ENCODE measurements at regions of chr5 and their contacts with region 1.

Region 1: DNA sequence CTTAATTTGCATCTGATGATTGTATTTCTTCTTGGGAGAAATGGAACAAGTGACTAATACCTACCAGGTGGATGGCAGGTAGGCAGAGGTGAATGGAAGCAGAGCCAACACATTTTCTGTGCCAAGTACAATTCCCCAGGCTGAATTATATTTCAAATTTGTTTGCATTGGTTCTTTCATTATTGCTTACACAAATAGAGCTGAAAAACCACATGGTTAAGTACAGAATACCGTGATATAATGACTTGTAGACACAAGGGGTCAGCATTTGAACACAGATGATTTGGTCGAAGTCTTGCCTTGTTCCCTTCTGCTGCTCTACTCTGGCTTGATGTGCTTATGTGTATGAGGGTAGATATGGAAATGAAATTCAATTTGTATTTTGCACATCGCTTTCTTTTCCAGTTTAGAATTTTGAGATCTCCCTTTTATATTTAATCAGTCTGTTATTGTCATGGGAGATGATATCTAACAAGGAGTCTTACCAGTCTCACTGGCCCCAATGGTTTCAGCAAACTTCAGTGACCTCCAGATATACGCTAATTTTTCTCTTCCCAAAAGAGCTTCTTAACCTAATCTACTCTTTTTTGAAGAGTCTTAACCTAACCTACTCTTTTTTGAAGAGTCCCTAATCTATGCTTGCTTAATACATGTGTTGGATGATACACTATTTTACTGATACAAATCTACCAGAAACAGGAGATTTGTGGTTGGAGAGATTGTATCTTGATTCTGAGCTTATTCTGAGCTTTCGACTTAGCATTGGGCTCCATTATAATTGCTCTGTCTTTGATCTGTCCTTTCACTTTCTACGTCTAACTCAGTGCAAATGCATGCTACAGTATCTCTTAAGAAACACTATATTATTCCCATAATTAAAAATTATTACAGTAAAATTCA is 88.1 kb downstream of the PCSK1 start:
- DNase-seq: no peak
- H3K4me3 ChIP-seq: no peak overlapping the region
- H3K27ac ChIP-seq: no peak overlapping the region
- H3K4me1 ChIP-seq: peaks cover 0 to 12% of the 10 kb centered on the region in 2 donors
- H3K27me3 ChIP-seq: no peaks in the 10 kb centered on the region
- CTCF ChIP-seq: peak; percentile 62 to 76 (median 66)

Region 2: GRCh38 chr5:95781101-95781583 is 563.8 kb before region 1 on chr5:
- intact Hi-C with region 1: loop called (anchors 5 kb)
- DNase-seq: peak; percentile 32 to 92
- H3K4me3 ChIP-seq: no peak overlapping the region
- H3K27ac ChIP-seq: peak overlapping the region; percentile 54 to 73
- H3K4me1 ChIP-seq: peaks cover 0 to 12% of the 10 kb centered on the region in 2 donors
- H3K27me3 ChIP-seq: no peaks in the 10 kb centered on the region
- CTCF ChIP-seq: peak; percentile 87 to 89 (median 88)

Region 3: GRCh38 chr5:96487859-96488258 is 142.9 kb after region 1 on chr5:
- intact Hi-C with region 1: loop called (anchors 5 kb)
- DNase-seq: no peak
- H3K4me3 ChIP-seq: no peak overlapping the region
- H3K27ac ChIP-seq: no peak overlapping the region
- H3K4me1 ChIP-seq: no peaks in the 10 kb centered on the region
- H3K27me3 ChIP-seq: no peaks in the 10 kb centered on the region
- CTCF ChIP-seq: no peak

Region 4: GRCh38 chr5:96601811-96602244 is 256.9 kb after region 1 on chr5:
- intact Hi-C with region 1: loop called (anchors 1 kb)
- DNase-seq: no peak
- H3K4me3 ChIP-seq: peak overlapping the region in 1 of 2 donors; percentile 29
- H3K27ac ChIP-seq: no peak overlapping the region
- H3K4me1 ChIP-seq: no peaks in the 10 kb centered on the region
- H3K27me3 ChIP-seq: no peaks in the 10 kb centered on the region
- CTCF ChIP-seq: peak; percentile 75 to 86 (median 85)